ENCODE measurements at regions of chr16 and their contacts with region 1.

Region 1: GRCh38 chr16:14249291-14250032 is 178.3 kb downstream of the MRTFB start:
- DNase-seq: peak in 1 of 2 experiments; percentile 46
- H3K4me3 ChIP-seq: no peak overlapping the region
- H3K4me3 Mint-ChIP-seq: no peak overlapping the region
- H3K27ac Mint-ChIP-seq: no peak overlapping the region
- H3K4me1 ChIP-seq: no peaks in the 10 kb centered on the region
- H3K4me1 Mint-ChIP-seq: no peaks in the 10 kb centered on the region
- H3K27me3 ChIP-seq: no peaks in the 10 kb centered on the region
- H3K27me3 Mint-ChIP-seq: no peaks in the 10 kb centered on the region
- CTCF ChIP-seq: peak; percentile 69 to 81

Region 2: GRCh38 chr16:14263011-14263410 is 13.5 kb after region 1 on chr16:
- CTCF ChIA-PET with region 1: interaction called, 3 read pairs
- POLR2A ChIA-PET with region 1: no interaction called
- intact Hi-C with region 1: loop called (anchors 1 kb)
- DNase-seq: no peak
- H3K4me3 ChIP-seq: no peak overlapping the region
- H3K4me3 Mint-ChIP-seq: no peak overlapping the region
- H3K27ac Mint-ChIP-seq: no peak overlapping the region
- H3K4me1 ChIP-seq: no peaks in the 10 kb centered on the region
- H3K4me1 Mint-ChIP-seq: no peaks in the 10 kb centered on the region
- H3K27me3 ChIP-seq: no peaks in the 10 kb centered on the region
- H3K27me3 Mint-ChIP-seq: no peaks in the 10 kb centered on the region
- CTCF ChIP-seq: no peak

Region 3: DNA sequence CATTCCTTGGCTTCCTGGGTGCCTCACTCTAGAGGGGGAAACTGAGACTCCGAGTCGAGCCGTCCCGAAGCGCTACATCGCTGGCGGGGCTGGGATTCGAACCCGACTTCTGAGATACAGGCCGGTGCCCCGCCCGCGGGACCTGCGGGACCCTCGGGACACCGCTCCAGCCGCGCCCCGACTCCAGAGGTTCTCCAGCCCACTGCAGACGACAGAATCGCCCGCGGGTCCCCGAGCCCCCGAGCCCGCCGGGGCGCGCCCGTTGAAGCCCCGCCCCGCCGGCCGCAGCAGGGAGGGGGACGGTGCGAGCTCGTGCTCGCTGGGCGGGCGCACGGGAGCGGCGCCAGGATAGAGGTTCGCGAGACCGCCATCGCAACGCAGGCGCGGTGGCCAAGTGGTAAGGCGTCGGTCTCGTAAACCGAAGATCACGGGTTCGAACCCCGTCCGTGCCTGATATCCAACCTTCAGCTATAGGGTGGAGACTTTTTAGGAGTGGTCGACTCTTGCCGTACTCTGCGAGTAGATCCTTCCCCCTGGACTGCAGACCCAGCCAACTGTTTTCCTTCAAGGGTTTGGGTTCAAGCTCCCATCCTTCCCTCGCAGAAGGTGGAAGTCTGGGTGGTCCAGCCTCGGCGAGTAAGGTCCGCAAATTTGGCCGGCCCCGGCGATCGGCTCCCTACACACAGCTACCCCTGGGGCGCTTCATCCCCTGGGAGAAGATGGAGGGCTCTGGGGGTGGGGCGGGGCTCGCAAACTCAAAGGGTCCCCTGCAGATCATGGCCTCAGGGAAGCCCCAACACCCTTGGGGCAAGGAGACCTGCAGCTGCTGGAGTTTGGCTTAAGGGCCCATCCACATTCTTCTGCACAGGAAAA is 36.3 kb after region 1 on chr16:
- CTCF ChIA-PET with region 1: interaction called, 3 read pairs
- POLR2A ChIA-PET with region 1: no interaction called
- intact Hi-C with region 1: loop called (anchors 1 kb)
- DNase-seq: peak; percentile 91 to 94
- H3K4me3 ChIP-seq: peak overlapping the region; percentile 88
- H3K4me3 Mint-ChIP-seq: peak overlapping the region; percentile 81
- H3K27ac Mint-ChIP-seq: peak overlapping the region; percentile 69
- H3K4me1 ChIP-seq: peaks cover 7% of the 10 kb centered on the region
- H3K4me1 Mint-ChIP-seq: peaks cover 7% of the 10 kb centered on the region
- H3K27me3 ChIP-seq: no peaks in the 10 kb centered on the region
- H3K27me3 Mint-ChIP-seq: no peaks in the 10 kb centered on the region
- CTCF ChIP-seq: no peak

Measured in Caco-2 (cell line).